ENCODE measurements at regions of chr3 and their contacts with region 1.

Region 1: DNA sequence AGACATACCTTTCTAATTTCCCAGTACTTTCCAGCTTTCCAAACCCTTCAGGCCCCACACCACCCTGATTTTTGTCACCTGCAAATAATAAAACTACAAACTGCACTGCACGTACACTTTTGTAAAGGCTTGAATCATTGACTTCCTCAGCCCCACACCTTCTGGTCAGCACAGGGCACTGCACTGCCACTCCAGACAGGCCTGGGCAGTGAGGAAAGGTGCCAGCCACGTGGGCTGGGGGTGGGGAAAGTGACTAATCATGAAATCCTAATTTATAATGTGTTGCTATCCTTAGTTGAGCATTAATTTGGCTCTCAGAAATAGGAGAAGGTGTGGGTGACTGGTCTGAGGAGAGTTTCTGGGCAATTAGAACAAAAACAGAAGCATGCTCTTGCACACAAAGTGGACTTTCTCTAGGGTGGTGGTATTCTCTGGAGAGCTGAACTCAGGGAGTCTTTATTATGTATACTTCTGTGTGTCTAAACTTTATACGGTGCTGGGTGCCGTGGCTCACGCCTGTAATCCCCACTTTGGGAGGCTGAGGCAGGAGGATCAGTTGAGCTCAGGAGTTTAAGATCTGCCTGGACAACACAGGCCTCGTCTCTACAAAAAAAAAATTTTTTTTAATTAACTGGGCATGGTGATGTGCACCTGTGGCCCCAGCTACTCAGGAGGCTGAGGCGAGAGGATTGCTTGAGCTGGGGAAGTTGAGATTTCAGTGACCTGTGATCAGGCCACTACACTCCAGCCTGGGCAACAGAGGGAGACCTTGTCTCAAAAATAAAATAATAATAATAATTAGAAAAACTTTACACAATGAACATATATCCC is 58.2 kb upstream of the FLNB start:
- DNase-seq: no peak
- H3K4me3 ChIP-seq: no peak overlapping the region
- H3K27ac ChIP-seq: peak overlapping the region; percentile 73 to 77
- H3K4me1 ChIP-seq: no peaks in the 10 kb centered on the region
- H3K27me3 ChIP-seq: no peaks in the 10 kb centered on the region
- CTCF ChIP-seq: peak in 2 of 4 experiments; percentile 38 to 50
- POLR2A ChIP-seq: no peak

Region 2: DNA sequence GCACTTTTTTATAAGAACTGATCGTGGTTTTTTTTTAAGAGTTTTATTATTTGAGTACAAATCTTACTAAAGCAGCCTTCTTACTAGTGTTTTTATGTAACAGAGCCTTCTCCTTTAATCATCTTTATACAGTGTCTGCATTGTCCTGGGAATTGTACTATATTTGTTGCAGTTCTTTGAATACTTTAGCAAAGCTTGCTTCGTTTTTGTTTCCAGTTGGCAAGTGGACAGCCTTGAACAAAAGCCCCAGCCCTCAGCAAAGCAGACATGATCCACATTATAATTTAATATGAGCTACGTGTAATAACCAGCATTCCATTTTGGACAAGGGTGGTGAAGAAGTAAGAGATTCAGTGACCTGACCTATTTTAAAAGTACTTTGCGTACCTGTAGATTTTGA is 54.0 kb before region 1 on chr3:
- intact Hi-C with region 1: loop called (anchors 5 kb)
- DNase-seq: no peak
- H3K4me3 ChIP-seq: no peak overlapping the region
- H3K27ac ChIP-seq: peak overlapping the region; percentile 10 to 25
- H3K4me1 ChIP-seq: peaks cover 4% of the 10 kb centered on the region
- H3K27me3 ChIP-seq: no peaks in the 10 kb centered on the region
- CTCF ChIP-seq: no peak
- POLR2A ChIP-seq: no peak

Region 3: DNA sequence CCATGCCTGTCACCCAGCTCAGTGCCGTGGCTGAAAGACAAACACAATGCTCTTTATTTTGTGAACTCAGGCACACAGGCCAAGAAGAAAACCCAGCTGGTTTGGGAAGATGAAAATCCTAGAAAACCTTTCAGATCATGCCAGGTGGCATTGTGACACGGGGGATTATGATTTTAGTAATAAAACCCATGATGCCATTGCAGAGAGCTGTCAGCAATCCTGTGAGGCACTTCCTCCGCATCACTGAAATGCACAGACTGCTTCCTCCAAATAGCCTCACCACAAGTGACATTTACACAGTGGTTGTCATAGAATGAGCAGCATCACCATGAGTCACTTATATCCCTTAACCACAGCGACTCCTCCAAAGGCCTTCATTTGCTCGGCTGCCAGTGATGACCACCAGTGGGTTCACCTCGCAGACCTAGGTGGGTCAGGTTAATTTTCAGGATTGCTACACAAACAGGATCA is 310.3 kb after region 1 on chr3:
- intact Hi-C with region 1: no loop called
- DNase-seq: no peak
- H3K4me3 ChIP-seq: no peak overlapping the region
- H3K27ac ChIP-seq: no peak overlapping the region
- H3K4me1 ChIP-seq: no peaks in the 10 kb centered on the region
- H3K27me3 ChIP-seq: no peaks in the 10 kb centered on the region
- CTCF ChIP-seq: no peak
- POLR2A ChIP-seq: no peak